HepG2 (cell line): ENCODE measurements at regions of chr3 and their contacts with region 1.

Region 1: DNA sequence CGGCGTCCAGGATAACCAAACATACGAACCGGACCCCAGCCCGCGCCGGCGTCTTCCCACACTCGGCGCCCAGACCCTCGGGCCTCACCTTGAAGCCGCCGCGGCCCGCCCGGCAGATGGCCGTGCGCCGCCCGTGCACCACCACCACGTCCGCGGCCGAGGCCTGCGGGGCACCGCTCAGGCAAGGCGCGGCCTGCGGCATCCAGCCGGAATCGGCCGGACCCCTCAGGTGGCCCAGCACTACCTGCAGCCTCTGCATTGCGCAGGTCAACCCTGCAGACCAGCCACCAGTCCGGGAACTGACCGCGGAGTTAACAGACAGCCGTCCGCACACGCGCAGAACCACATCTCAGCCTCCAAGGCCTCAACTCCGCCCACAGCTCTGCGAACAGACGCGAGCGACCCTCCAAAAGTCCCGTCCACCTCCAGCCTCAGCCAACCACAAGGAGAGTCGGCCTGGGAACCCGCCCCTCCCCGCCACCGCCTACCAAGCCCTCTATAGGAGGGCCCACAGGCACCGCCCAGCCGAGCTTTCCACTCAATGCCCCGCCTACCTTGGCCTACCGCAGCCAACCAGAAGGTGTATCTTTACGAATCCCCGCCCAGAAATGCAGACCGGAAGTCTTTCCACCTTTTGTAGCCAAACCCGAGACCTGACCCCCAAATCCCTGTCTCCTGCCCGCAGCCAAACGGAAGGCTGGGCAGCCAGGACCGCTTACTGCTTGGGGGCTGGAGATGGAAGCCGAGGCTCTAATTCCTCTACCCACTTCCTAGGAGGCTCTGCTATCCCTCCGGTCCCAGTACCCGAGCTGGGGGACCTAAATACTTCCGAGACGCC is at the start of gene ACAA1:
- DNase-seq: peak; percentile 97
- ATAC-seq: peak; percentile 81
- H3K4me3 ChIP-seq: peak within 1 kb of the TSS; percentile 85 to 96 (median 89)
- H3K27ac ChIP-seq: peak within 1 kb of the TSS; percentile 97
- H3K4me1 ChIP-seq: peaks cover 57% of the 10 kb centered on the region
- H3K27me3 ChIP-seq: no peaks in the 10 kb centered on the region; a peak in 1 of 5 replicates
- CTCF ChIP-seq: no peak
- EP300 ChIP-seq: no peak
- POLR2A ChIP-seq: peak in 1 of 2 experiments; percentile 94; a peak in 2 of 4 replicates
- RAD21 ChIP-seq: peak; percentile 46
- total RNA-seq, gene ACAA1: 60.8 and 107 TPM in 2 replicates

Region 2: GRCh38 chr3:38004415-38005076 is 132.4 kb before region 1 on chr3:
- CTCF ChIA-PET with region 1: no interaction called
- POLR2A ChIA-PET with region 1: interaction called, 4 read pairs
- in situ Hi-C with region 1: no loop called
- intact Hi-C with region 1: loop called (anchors 2 kb)
- DNase-seq: peak; percentile 88
- ATAC-seq: peak; percentile 84
- H3K4me3 ChIP-seq: peak overlapping the region; percentile 43 to 77 (median 59)
- H3K27ac ChIP-seq: peak overlapping the region; percentile 76
- H3K4me1 ChIP-seq: peaks cover 63% of the 10 kb centered on the region
- H3K27me3 ChIP-seq: peaks cover 0 to 10% of the 10 kb centered on the region in 2 experiments; a peak in 2 of 5 replicates
- CTCF ChIP-seq: peak; percentile 97
- EP300 ChIP-seq: no peak
- POLR2A ChIP-seq: no peak
- RAD21 ChIP-seq: peak; percentile 31; the same call in 1 of the 2 replicates

Region 3: GRCh38 chr3:38043486-38043885 is 93.5 kb before region 1 on chr3:
- CTCF ChIA-PET with region 1: no interaction called
- POLR2A ChIA-PET with region 1: no interaction called
- in situ Hi-C with region 1: no loop called
- intact Hi-C with region 1: no loop called
- DNase-seq: no peak
- ATAC-seq: no peak
- H3K4me3 ChIP-seq: no peak overlapping the region
- H3K27ac ChIP-seq: no peak overlapping the region
- H3K4me1 ChIP-seq: no peaks in the 10 kb centered on the region
- H3K27me3 ChIP-seq: peaks cover 3 to 27% of the 10 kb centered on the region in 2 experiments; a peak in 3 of 5 replicates
- CTCF ChIP-seq: no peak
- EP300 ChIP-seq: no peak
- POLR2A ChIP-seq: no peak
- RAD21 ChIP-seq: no peak

Region 4: DNA sequence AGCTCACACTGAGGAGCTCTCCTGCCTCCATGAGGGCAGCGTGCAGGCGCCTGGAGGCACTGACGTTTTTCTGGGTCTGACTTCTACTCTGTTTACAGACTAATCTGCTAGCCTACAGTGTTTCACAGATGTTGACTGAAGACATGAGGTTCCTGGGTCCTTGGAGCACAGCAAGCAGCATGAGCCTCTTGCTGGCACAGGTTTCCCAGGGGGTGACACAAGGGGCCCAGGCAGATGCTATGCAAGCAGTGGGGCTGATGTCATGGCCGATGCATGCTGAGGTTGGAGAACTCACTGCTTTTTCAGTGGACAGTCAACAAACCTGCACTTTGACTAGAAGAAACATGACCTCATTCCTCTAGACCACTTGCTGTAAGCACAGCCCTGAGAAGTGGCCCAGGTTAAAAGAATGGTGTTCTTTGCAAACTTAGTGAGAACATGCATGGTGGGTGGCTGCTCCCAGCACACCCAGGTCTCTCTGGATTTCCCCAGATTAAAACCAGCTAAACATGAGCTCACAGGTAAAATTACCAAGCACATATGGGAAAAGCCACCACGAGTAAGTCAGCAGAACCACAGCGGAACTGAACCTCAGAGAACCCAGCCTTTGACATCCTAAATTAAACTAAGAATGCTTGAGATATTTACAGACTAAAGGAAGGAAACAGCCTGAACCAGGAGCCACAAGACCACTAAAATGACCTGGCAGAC is 82.5 kb before region 1 on chr3:
- CTCF ChIA-PET with region 1: no interaction called
- POLR2A ChIA-PET with region 1: no interaction called
- in situ Hi-C with region 1: no loop called
- intact Hi-C with region 1: no loop called
- DNase-seq: peak; percentile 66
- ATAC-seq: peak; percentile 86
- H3K4me3 ChIP-seq: peak overlapping the region in 1 of 3 experiments; percentile 27; a peak in 1 of 6 replicates
- H3K27ac ChIP-seq: no peak overlapping the region
- H3K4me1 ChIP-seq: peaks cover 28% of the 10 kb centered on the region
- H3K27me3 ChIP-seq: peaks cover 0 to 1% of the 10 kb centered on the region in 2 experiments; a peak in 2 of 5 replicates
- CTCF ChIP-seq: no peak
- EP300 ChIP-seq: no peak
- POLR2A ChIP-seq: no peak
- RAD21 ChIP-seq: no peak

Region 5: GRCh38 chr3:38154033-38154494 is 17.1 kb after region 1 on chr3:
- CTCF ChIA-PET with region 1: no interaction called
- POLR2A ChIA-PET with region 1: interaction called, 12 read pairs
- in situ Hi-C with region 1: no loop called
- intact Hi-C with region 1: no loop called
- DNase-seq: no peak
- ATAC-seq: no peak
- H3K4me3 ChIP-seq: no peak overlapping the region
- H3K27ac ChIP-seq: no peak overlapping the region
- H3K4me1 ChIP-seq: peaks cover 7% of the 10 kb centered on the region; the same call in 1 of the 2 replicates
- H3K27me3 ChIP-seq: no peaks in the 10 kb centered on the region
- CTCF ChIP-seq: no peak
- EP300 ChIP-seq: no peak
- POLR2A ChIP-seq: no peak
- RAD21 ChIP-seq: no peak

Region 6: DNA sequence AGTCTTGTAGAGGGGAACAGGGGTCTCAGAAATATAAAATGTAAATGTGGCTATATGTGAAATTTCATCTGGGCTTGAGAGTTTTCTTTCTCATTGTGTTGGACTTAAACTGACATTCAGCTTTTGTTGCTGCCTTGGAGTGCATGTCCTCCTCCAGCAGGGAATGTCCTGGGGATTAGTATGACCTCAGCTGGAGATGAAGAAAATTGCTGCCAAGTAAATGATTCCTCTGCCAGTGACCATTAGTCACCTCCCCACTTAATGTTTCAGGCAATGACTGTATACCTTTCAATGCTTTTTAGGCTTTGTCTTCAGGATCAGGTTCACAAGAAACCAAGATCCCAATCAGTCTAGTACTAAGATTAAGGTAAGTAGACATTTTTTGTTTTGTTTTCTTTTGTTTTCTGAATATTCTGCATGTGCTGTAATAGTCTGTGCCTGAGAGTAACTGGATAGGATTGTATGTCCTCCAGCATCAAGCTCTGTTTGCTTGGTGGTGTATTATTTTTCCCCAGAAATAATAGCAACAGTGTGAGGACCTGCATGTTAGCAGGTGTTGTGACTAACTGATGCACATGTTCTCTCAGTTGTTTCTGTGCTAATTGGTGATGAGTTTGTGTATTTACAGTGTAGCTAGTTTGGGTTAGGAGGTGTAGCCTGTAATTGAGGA is 110.5 kb after region 1 on chr3:
- CTCF ChIA-PET with region 1: no interaction called
- POLR2A ChIA-PET with region 1: interaction called, 3 read pairs
- in situ Hi-C with region 1: no loop called
- intact Hi-C with region 1: loop called (anchors 10 kb)
- DNase-seq: peak; percentile 6
- ATAC-seq: peak; percentile 51
- H3K4me3 ChIP-seq: no peak overlapping the region
- H3K27ac ChIP-seq: no peak overlapping the region
- H3K4me1 ChIP-seq: peaks cover 16% of the 10 kb centered on the region
- H3K27me3 ChIP-seq: no peaks in the 10 kb centered on the region; a peak in 1 of 5 replicates
- CTCF ChIP-seq: no peak
- EP300 ChIP-seq: no peak
- POLR2A ChIP-seq: no peak
- RAD21 ChIP-seq: no peak

Region 7: DNA sequence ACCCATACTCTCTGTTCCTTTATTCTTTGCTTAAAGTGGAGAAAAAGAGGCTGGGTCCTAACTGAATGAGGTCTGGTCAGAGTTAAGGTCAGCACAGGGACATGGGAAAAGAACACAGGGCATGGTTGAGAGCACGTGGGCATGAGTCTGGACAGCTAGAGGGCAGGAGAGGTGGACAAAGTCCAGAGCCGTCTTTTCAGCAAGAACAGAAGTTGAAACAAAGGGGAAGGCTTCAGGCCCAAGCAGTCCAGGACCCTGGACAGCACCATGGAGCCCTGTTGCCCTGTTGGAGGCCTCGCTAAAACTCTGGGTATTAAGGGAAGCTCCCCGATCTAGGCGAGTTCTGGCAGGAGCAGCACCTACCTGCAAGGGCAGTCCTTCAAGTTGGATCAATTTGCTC is 260.3 kb after region 1 on chr3:
- CTCF ChIA-PET with region 1: no interaction called
- POLR2A ChIA-PET with region 1: no interaction called
- in situ Hi-C with region 1: no loop called
- intact Hi-C with region 1: no loop called
- DNase-seq: peak; percentile 40
- ATAC-seq: peak; percentile 82
- H3K4me3 ChIP-seq: no peak overlapping the region
- H3K27ac ChIP-seq: no peak overlapping the region
- H3K4me1 ChIP-seq: peaks cover 20% of the 10 kb centered on the region
- H3K27me3 ChIP-seq: no peaks in the 10 kb centered on the region
- CTCF ChIP-seq: 0 out of 2 replicates have a peak, but pooled peaks have one; percentile 34
- EP300 ChIP-seq: 0 out of 4 replicates have a peak, but pooled peaks of 1 of the 2 experiments have one; percentile 8
- POLR2A ChIP-seq: no peak
- RAD21 ChIP-seq: no peak

Region 8: GRCh38 chr3:38453075-38453912 is 316.3 kb after region 1 on chr3 and contains the start of gene ACVR2B:
- CTCF ChIA-PET with region 1: no interaction called
- POLR2A ChIA-PET with region 1: interaction called, 6 read pairs
- in situ Hi-C with region 1: loop called (anchors 25 kb)
- intact Hi-C with region 1: no loop called
- DNase-seq: peak; percentile 65
- ATAC-seq: peak; percentile 48
- H3K4me3 ChIP-seq: peak within 1 kb of the TSS; percentile 55 to 79 (median 64)
- H3K27ac ChIP-seq: peak within 1 kb of the TSS; percentile 86
- H3K4me1 ChIP-seq: peaks cover 30% of the 10 kb centered on the region
- H3K27me3 ChIP-seq: no peaks in the 10 kb centered on the region
- CTCF ChIP-seq: no peak
- EP300 ChIP-seq: no peak
- POLR2A ChIP-seq: no peak; a peak in 2 of 4 replicates
- RAD21 ChIP-seq: no peak
- total RNA-seq, gene ACVR2B: 10.0 and 11.3 TPM in 2 replicates